AG04450 (cell line): ENCODE measurements at regions of chr11 and their contacts with region 1.

Region 1: DNA sequence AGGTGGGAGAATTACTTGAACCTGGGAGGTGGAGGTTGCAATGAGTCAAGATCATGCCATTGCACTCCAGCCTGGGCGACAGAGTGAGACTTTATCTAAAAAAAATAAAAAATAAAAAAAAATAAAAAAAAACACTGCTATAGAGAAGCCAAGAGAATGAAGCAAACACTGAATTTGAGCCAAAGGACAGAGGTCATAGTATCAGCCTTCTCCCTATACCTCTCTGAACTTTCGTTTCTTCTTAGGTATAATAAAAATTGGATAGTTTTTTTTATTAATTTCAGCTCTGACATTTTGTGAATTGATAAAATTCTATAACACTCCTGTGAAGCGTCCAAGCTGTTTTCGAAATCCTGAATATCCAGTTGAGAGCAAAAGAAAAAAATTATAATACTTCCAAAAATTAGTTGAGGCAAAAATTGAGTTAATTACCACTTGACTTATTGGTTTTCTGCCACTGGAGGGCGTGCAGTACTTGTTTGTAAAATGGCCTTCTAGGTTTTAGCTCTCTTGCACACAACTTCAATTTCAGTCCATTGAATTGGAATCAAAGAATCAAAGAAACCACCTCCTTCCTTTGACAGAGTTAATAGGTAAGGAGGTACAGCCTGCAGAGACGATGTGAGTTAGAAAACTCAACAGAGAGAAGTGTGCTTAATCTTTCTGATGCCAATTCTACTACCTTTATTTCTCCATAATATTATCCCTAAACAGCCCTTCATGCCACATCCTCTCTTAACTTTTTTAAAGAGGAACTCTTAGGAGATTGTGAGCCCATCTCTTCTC is 143.2 kb downstream of the BBOX1 start:
- DNase-seq: peak; percentile 41
- H3K4me3 ChIP-seq: no peak overlapping the region
- H3K27ac ChIP-seq: no peak overlapping the region
- H3K27me3 ChIP-seq: peaks cover 20% of the 10 kb centered on the region
- CTCF ChIP-seq: peak; percentile 79

Region 2: GRCh38 chr11:27055118-27055557 is 128.7 kb before region 1 on chr11:
- CTCF ChIA-PET with region 1: no interaction called
- POLR2A ChIA-PET with region 1: no interaction called
- DNase-seq: no peak
- H3K4me3 ChIP-seq: no peak overlapping the region
- H3K27ac ChIP-seq: no peak overlapping the region
- H3K27me3 ChIP-seq: no peaks in the 10 kb centered on the region
- CTCF ChIP-seq: no peak

Region 3: GRCh38 chr11:27331981-27332380 is 148.1 kb after region 1 on chr11:
- CTCF ChIA-PET with region 1: no interaction called
- POLR2A ChIA-PET with region 1: no interaction called
- DNase-seq: no peak
- H3K4me3 ChIP-seq: no peak overlapping the region
- H3K27ac ChIP-seq: no peak overlapping the region
- H3K27me3 ChIP-seq: no peaks in the 10 kb centered on the region
- CTCF ChIP-seq: no peak

Region 4: GRCh38 chr11:27472398-27473016 is 288.6 kb after region 1 on chr11 and contains the start of gene LGR4:
- CTCF ChIA-PET with region 1: interaction called, 16 read pairs
- POLR2A ChIA-PET with region 1: no interaction called
- DNase-seq: peak; percentile 74
- H3K4me3 ChIP-seq: peak within 1 kb of the TSS; percentile 75
- H3K27ac ChIP-seq: peak within 1 kb of the TSS; percentile 34
- H3K27me3 ChIP-seq: no peaks in the 10 kb centered on the region
- CTCF ChIP-seq: no peak
- polyA plus RNA-seq, gene LGR4: 4.2 and 5.8 TPM in 2 replicates

Region 5: DNA sequence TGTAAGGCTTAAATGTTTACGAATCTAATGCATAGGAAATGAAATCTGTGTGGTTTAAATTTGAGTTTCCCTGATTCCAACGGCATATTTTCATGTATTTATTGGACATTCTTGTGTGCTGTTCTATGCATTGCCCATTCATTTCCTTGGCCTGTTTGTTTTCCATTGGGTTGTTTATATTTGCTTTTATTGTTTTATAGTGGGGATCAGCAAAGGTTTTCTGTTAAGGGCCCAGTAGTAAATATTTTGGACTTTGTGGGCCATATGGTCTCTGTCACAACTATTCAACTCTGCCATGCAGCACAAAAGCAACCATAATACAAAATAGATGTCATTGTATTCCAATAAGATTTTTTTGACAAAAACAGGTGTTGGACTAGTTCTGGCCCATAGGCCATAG is 294.0 kb after region 1 on chr11:
- CTCF ChIA-PET with region 1: interaction called, 305 read pairs
- POLR2A ChIA-PET with region 1: no interaction called
- DNase-seq: no peak
- H3K4me3 ChIP-seq: no peak overlapping the region
- H3K27ac ChIP-seq: no peak overlapping the region
- H3K27me3 ChIP-seq: no peaks in the 10 kb centered on the region
- CTCF ChIP-seq: no peak

Region 6: GRCh38 chr11:27497284-27497866 is 313.5 kb after region 1 on chr11:
- CTCF ChIA-PET with region 1: interaction called, 32 read pairs
- POLR2A ChIA-PET with region 1: no interaction called
- DNase-seq: no peak
- H3K4me3 ChIP-seq: no peak overlapping the region
- H3K27ac ChIP-seq: no peak overlapping the region
- H3K27me3 ChIP-seq: no peaks in the 10 kb centered on the region
- CTCF ChIP-seq: peak; percentile 44